PC-9 (cell line): ENCODE measurements at regions of chr15 and their contacts with region 1.

Region 1: GRCh38 chr15:55168329-55168974 is 28.3 kb downstream of the RSL24D1 start:
- DNase-seq: peak in 1 of 2 experiments; percentile 46
- H3K4me3 ChIP-seq: no peak overlapping the region
- H3K27ac ChIP-seq: no peak overlapping the region
- H3K4me1 ChIP-seq: no peaks in the 10 kb centered on the region
- H3K27me3 ChIP-seq: 0 out of 2 replicates have a peak, but pooled peaks cover 4% of the 10 kb centered on the region
- CTCF ChIP-seq: peak; percentile 84

Region 2: DNA sequence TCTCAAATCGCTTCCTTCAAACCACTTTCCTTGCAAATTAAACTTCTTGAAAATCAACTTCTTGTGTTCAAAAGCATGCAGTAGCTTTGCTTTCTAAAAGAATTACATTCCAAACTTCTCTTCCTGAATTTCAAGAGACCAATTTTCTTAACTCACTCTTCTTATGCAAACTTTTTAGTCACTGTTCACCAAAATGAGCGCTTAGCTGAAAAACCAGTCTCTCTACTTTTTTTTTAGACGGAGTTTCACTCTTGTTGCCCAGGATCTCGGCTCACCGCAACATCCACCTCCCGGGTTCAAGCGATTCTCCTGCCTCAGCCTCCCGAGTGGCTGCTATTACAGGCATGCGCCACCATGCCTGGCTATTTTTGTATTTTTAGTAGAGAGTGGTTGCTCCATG is 1269.1 kb before region 1 on chr15:
- CTCF ChIA-PET with region 1: no interaction called
- POLR2A ChIA-PET with region 1: no interaction called
- intact Hi-C with region 1: loop called (anchors 5 kb)
- DNase-seq: no peak
- H3K4me3 ChIP-seq: no peak overlapping the region
- H3K27ac ChIP-seq: no peak overlapping the region
- H3K4me1 ChIP-seq: no peaks in the 10 kb centered on the region
- H3K27me3 ChIP-seq: no peaks in the 10 kb centered on the region
- CTCF ChIP-seq: no peak

Region 3: DNA sequence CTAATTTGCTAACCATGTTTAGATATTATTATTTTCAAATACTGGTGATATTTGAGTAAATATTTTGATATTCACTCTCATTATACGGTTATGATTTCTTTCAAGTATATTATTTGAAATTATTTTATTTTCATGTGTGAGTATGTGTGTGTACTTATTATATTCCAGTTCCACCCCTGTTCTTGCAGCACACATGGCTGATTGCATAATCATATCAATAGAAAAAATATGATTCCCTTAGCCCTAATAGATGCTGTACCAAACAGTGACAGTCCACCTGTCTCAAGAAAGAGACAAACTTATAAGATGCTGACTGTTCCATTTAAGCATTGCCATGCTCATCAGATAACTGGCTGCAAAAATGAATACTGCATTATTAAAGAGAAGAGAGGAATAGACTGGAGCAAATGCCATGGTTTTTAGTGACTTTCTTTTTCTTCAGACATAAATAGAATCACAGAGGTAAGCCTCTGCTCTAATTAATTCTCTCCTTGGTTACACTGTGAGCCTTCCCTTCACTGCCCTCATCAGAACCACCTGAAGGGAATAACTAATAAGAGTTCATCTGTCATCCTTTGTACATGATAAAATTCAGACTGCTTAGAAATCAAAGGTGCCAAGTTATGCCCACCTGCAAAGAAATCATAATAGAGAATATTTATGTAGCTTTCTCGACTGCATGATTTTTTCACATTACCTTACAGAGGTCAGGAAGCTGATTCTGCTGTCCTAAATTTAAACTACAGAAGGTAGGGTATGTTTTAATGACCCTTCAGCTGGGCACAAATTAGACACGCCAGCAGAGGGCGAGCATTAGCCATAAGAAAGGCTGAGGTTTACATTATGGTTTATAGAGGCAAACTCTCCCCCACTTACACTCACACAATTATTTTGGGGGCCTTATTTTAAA is 1205.9 kb before region 1 on chr15:
- CTCF ChIA-PET with region 1: no interaction called
- POLR2A ChIA-PET with region 1: no interaction called
- intact Hi-C with region 1: loop called (anchors 1 kb)
- DNase-seq: peak in 1 of 2 experiments; percentile 7
- H3K4me3 ChIP-seq: no peak overlapping the region
- H3K27ac ChIP-seq: no peak overlapping the region
- H3K4me1 ChIP-seq: no peaks in the 10 kb centered on the region
- H3K27me3 ChIP-seq: no peaks in the 10 kb centered on the region
- CTCF ChIP-seq: peak; percentile 63

Region 4: DNA sequence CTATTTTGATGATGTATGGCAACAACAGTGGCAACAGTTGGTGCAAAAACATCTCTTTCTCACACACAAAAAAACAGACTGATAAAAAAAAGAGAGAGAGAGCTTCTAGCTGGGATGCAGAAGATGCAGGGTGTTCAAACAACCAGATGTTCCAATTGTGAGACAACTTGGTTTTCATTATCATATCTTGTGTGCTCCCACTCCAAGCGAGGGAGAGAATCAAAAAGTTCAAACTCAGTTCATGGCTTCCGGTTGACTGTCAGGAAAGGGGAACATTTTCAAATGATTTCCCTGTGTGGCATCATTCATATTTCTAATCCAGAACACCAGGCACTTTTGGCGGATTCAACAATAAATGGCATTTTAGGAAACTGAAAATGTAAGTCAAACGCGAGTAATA is 43.8 kb before region 1 on chr15:
- CTCF ChIA-PET with region 1: no interaction called
- POLR2A ChIA-PET with region 1: no interaction called
- intact Hi-C with region 1: no loop called
- DNase-seq: no peak
- H3K4me3 ChIP-seq: no peak overlapping the region
- H3K27ac ChIP-seq: no peak overlapping the region
- H3K4me1 ChIP-seq: no peaks in the 10 kb centered on the region
- H3K27me3 ChIP-seq: peaks cover 3% of the 10 kb centered on the region; the same call in 1 of the 2 replicates
- CTCF ChIP-seq: no peak

Region 5: GRCh38 chr15:55475842-55476241 is 307.4 kb after region 1 on chr15:
- CTCF ChIA-PET with region 1: no interaction called
- POLR2A ChIA-PET with region 1: no interaction called
- intact Hi-C with region 1: no loop called
- DNase-seq: no peak
- H3K4me3 ChIP-seq: no peak overlapping the region
- H3K27ac ChIP-seq: no peak overlapping the region
- H3K4me1 ChIP-seq: no peaks in the 10 kb centered on the region
- H3K27me3 ChIP-seq: no peaks in the 10 kb centered on the region
- CTCF ChIP-seq: no peak